A549 (cell line): ENCODE measurements at regions of chr6 and their contacts with region 1.

Region 1: DNA sequence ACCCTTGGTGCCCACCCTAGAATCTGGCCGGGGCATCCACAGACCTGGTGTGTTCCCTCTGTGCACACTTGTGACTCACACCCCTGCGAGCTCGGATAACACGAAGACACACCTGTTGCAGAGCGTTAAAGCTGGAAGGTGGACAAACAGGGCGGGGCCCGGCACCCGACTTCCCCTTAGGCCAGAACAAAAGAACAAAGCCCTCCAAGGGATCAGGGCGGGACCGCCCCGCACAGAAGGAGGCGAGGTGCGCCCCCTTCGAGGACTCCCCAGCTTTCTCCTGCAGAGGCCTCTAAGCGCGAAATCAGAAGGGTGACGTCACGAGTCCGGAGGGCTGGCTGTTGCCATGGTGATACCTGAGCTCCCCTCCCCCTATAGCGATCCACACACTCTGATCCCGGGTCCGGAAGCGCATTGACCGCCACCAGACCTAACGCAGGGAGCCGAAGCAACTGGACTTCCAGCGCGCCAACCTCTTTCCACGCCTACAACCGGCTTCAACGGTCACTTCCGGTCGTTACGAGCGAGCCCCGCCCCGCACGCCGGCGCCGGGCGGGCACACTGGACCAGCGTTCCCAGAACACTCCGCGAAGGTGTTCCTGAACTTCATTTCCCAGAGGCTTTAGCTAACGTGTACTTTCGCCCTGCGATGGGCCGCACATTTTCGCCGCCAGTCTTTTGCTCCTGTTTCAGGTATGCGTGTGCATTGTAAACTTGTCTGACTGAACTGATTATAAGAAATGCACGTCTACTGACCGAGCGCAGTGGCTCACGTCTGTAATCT is at the start of gene ZNF184:
- DNase-seq: peak; percentile 76 to 98
- ATAC-seq: peak; percentile 96 to 98
- H3K4me3 ChIP-seq: peak within 1 kb of the TSS; percentile 73
- H3K27ac ChIP-seq: peak within 1 kb of the TSS; percentile 87 to 94
- H3K4me1 ChIP-seq: 0 out of 3 replicates have a peak, but pooled peaks cover 4% of the 10 kb centered on the region
- CTCF ChIP-seq: no peak
- EP300 ChIP-seq: no peak
- POLR2A ChIP-seq: peak; percentile 58
- RAD21 ChIP-seq: no peak
- polyA plus RNA-seq, gene ZNF184: 4.1 and 4.9 TPM in 2 replicates

Region 2: DNA sequence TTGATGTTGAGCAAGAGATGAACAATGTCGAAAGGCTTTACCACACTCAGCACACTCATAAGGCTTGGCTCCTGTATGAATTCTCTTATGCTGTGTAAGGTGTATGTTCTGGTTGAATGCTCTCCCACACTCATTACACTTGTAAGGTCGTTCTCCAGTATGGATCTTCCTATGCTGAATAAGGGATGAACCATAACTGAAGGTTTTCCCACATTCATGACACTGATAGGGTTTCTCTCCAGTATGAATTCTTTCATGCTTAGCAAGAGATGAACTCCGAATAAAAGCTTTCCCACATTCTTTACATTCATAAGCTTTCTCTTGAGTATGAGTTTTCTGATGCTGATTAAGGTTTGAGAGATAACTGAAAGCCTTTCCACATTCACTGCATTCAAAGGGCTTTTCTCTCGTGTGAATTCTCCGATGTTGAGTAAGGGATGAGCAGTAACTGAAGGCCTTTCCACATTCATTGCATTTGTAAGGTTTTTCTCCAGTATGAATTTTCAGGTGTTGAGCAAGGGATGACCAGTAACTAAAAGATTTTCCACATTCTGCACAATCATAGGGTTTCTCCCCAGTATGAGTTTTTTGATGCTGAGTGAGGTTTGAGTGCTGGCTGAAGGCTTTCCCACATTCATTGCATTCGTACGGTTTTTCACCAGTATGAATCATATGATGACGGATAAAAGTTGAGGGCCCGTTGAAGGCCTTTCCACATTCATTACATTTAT is 21.0 kb before region 1 on chr6:
- CTCF ChIA-PET with region 1: no interaction called
- POLR2A ChIA-PET with region 1: interaction called, 14 read pairs
- DNase-seq: no peak
- ATAC-seq: no peak
- H3K4me3 ChIP-seq: no peak overlapping the region
- H3K27ac ChIP-seq: no peak overlapping the region
- H3K4me1 ChIP-seq: no peaks in the 10 kb centered on the region
- CTCF ChIP-seq: no peak
- EP300 ChIP-seq: no peak
- POLR2A ChIP-seq: no peak
- RAD21 ChIP-seq: no peak

Region 3: DNA sequence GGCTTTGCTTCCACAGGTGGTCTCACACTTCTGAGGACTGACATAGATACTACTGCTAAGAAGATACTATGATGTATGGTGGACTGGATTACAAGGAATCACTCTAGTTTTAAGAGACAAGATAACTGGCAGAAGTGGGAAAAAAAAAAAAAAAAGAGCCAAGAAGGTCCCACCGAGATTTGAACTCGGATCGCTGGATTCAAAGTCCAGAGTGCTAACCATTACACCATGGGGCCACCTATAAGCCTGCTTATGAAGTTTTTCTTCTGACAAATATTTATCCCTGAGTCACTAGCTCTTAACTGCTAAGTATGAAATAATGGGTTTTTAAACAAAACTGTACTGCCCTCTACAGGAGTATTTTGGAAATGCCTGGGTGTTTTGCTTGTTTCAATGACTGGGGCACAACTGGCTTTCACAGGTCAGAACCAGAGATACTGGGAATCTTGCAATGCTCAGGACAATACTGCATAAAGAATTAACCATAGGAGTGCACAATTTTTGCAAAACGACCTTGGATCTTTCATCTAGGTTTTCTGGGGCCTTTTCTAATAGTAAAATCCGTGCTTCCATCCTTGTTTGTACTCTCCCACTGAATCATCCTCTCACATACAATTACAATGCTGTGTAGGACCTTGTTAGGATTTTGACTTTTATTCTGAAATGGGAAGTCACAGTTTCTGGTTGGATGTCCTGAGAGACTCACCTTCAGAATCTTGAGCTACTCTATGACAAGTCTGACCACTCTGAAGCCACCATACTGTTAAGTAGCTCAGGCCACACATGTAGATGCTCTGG is 323.1 kb after region 1 on chr6:
- CTCF ChIA-PET with region 1: no interaction called
- POLR2A ChIA-PET with region 1: no interaction called
- DNase-seq: peak; percentile 36 to 86
- ATAC-seq: peak; percentile 40 to 55; a peak in 4 of 6 replicates
- H3K4me3 ChIP-seq: no peak overlapping the region
- H3K27ac ChIP-seq: no peak overlapping the region
- H3K4me1 ChIP-seq: peaks cover 10% of the 10 kb centered on the region
- CTCF ChIP-seq: peak; percentile 70
- EP300 ChIP-seq: no peak
- POLR2A ChIP-seq: no peak
- RAD21 ChIP-seq: peak; percentile 66 to 69